Head of caudate nucleus (tissue), 42 donors: ENCODE measurements at regions of chr1 and their contacts with region 1.

Region 1: DNA sequence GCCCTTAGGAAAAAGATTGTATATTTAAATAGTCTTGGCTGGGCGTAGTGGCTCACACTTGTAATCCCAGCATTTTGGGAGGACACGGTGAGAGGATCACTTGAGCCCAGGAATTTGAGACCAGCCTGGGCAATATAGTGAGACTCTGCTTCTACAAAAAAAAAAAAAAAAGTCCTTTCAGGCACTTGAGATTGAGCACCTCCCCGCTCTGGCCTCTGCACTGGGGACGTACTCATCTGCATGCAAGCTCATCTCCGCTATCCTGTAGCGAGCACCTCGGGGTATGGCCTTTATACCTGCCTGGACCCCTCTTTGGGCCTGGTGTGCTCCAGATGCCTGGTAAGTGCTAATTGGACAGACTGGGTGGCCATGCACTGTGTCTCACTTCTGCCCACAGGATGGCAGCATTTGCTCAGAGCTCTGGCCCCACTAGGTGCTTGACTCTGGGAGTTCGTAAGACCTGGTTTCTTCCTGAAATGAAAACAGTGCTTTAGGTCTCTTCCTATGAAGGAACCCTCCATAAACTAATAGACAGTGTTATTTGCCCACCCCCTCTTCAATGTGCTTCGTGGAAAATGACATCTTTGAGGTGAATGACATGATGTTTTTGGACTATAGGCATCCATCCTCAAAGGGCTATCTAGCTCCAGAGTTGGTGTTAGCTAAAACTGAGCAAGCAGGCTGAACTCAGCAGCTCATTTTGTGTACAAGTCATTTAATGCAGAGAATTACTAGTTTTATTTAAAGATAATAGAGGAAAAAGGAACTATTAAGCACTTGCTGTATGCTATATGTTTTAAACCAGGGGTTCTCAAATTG is 61.7 kb upstream of the ADAR start:
- DNase-seq: peak; percentile 65 to 93 (median 82)

Region 2: GRCh38 chr1:154695985-154696384 is 26.3 kb after region 1 on chr1:
- intact Hi-C with region 1: no loop called
- DNase-seq: peak in 1 of 42 donors; percentile 14

Region 3: DNA sequence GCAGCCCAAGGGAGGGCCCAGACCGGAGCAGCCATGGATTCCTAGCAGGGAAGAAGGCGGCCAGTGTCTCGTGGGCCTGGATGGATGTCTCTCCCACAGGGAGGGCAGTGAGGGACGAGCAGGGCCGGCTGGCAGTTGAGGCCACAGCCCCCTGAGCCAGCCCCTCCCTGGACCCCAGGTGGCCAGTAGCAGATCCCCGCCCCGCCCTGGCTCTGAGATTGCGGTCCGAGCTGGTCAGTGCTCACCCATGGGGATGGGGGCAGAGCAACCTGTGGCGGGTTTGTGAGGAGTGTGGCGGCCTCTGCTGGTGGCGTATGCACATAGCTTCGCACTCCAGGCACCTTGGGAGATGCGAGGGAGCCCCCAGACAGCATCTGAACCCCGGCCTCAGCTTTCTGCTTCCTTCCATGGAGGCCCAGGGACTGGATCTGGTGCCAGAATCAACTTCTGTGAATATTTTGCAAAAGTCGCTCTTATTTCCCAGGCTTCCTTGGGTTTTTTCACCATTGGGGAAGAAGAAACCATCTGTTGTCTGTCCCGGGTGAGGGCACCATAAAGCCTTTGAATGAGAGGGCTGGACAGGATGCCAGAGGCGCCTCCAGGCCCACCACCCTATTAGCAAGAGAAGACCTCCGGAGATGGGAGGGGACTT is 208.8 kb after region 1 on chr1:
- intact Hi-C with region 1: loop called (anchors 2 kb)
- DNase-seq: peak; percentile 78 to 94 (median 88)